CD8-positive, alpha-beta T cell (primary cell): ENCODE measurements at regions of chr11 and their contacts with region 1.

Region 1: DNA sequence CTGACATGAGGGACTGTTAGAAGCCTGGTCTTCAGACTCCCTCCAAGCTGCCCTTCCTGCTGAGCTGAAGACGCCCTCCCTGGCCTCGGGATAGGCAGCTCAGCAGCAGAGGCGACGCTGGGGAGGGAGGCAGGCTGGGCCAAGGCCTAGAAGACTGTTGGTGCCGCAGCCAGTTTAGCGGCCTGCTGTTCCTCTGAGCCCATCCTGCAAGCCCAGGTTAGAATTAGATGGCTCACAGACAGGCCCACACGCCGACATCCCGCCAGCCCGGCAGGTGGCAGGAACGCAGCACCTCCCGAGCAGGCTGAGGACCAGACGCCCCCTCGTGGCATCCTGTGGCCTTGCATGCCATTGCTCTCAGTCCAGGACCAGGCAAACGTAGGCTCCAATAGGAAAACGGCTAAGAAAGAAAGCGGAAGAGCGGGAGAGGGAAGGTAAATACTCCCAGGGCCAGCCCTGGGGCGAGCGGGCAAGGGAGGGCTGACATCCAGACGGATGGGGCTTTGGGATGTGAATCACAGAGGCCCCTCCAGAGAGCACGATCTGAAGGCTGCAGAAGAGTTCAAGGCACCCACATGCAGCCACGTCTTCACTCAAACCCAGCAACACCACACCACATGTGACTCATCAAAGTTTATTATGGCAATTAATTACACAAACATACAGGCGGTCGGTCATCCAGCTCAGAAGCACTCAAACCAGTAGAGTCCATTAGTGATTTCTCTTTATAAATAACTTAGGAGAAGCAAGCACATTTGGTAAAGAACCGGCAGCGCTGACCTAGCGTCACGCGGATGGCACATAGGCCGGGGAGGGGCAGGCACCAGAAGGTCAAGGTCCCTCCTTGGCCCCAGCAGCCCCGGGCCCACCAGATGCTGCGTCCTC is 27.6 kb downstream of the CD5 start:
- DNase-seq: peak; percentile 76 to 95 (median 91)
- ATAC-seq: peak; percentile 91
- H3K4me3 ChIP-seq: no peak overlapping the region
- H3K4me3 Mint-ChIP-seq: peak overlapping the region; percentile 46
- H3K27ac ChIP-seq: no peak overlapping the region
- H3K27ac Mint-ChIP-seq: peak overlapping the region; percentile 64
- H3K4me1 ChIP-seq: peaks cover 17% of the 10 kb centered on the region
- H3K4me1 Mint-ChIP-seq: peaks cover 21% of the 10 kb centered on the region
- H3K27me3 ChIP-seq: no peaks in the 10 kb centered on the region
- H3K27me3 Mint-ChIP-seq: no peaks in the 10 kb centered on the region
- CTCF ChIP-seq: peak; percentile 100

Region 2: DNA sequence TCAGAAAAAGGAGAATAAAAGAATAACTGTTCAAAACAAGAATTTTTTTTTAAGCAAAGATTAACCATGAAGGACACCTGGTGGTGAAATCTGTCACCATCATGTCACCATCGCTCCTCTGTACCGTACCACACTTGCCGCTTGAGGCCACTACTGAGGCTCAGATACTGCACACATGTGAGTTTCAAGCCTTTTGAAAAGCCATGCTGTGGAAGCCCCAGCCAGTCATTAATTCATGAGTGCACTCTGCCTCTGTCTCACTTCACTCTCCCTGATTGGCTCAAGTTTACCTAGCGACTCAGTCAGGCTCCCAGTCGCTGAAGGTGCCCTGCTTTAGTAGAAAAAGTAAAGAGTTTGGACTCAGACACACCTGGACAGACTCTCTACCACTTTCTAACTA is 643.9 kb before region 1 on chr11:
- CTCF ChIA-PET with region 1: no interaction called
- POLR2A ChIA-PET with region 1: no interaction called
- intact Hi-C with region 1: no loop called
- DNase-seq: peak in 2 of 9 experiments; percentile 36 to 53
- ATAC-seq: no peak
- H3K4me3 ChIP-seq: no peak overlapping the region
- H3K4me3 Mint-ChIP-seq: no peak overlapping the region
- H3K27ac ChIP-seq: no peak overlapping the region
- H3K27ac Mint-ChIP-seq: no peak overlapping the region
- H3K4me1 ChIP-seq: no peaks in the 10 kb centered on the region
- H3K4me1 Mint-ChIP-seq: no peaks in the 10 kb centered on the region
- H3K27me3 ChIP-seq: no peaks in the 10 kb centered on the region
- H3K27me3 Mint-ChIP-seq: peaks cover 2% of the 10 kb centered on the region
- CTCF ChIP-seq: no peak

Region 3: GRCh38 chr11:61071208-61071681 is 58.6 kb before region 1 on chr11:
- CTCF ChIA-PET with region 1: interaction called, 10 read pairs
- POLR2A ChIA-PET with region 1: interaction called, 4 read pairs
- intact Hi-C with region 1: no loop called
- DNase-seq: peak; percentile 37 to 87 (median 73)
- ATAC-seq: peak; percentile 98
- H3K4me3 ChIP-seq: no peak overlapping the region
- H3K4me3 Mint-ChIP-seq: peak overlapping the region; percentile 64
- H3K27ac ChIP-seq: peak overlapping the region; percentile 13 to 74
- H3K27ac Mint-ChIP-seq: peak overlapping the region; percentile 94
- H3K4me1 ChIP-seq: peaks cover 76% of the 10 kb centered on the region
- H3K4me1 Mint-ChIP-seq: peaks cover 81% of the 10 kb centered on the region
- H3K27me3 ChIP-seq: no peaks in the 10 kb centered on the region
- H3K27me3 Mint-ChIP-seq: no peaks in the 10 kb centered on the region
- CTCF ChIP-seq: no peak

Region 4: GRCh38 chr11:61111786-61112517 is 17.9 kb before region 1 on chr11:
- CTCF ChIA-PET with region 1: interaction called, 29 read pairs
- POLR2A ChIA-PET with region 1: interaction called, 5 read pairs
- intact Hi-C with region 1: no loop called
- DNase-seq: peak in 6 of 9 experiments; percentile 48 to 83 (median 66)
- ATAC-seq: peak; percentile 79
- H3K4me3 ChIP-seq: no peak overlapping the region
- H3K4me3 Mint-ChIP-seq: peak overlapping the region; percentile 79
- H3K27ac ChIP-seq: peak overlapping the region; percentile 46 to 91
- H3K27ac Mint-ChIP-seq: peak overlapping the region; percentile 87
- H3K4me1 ChIP-seq: peaks cover 86% of the 10 kb centered on the region
- H3K4me1 Mint-ChIP-seq: peaks cover 91% of the 10 kb centered on the region
- H3K27me3 ChIP-seq: peaks cover 0 to 4% of the 10 kb centered on the region in 2 experiments
- H3K27me3 Mint-ChIP-seq: no peaks in the 10 kb centered on the region
- CTCF ChIP-seq: no peak

Region 5: GRCh38 chr11:61141601-61142028 is 11.7 kb after region 1 on chr11:
- CTCF ChIA-PET with region 1: interaction called, 10 read pairs
- POLR2A ChIA-PET with region 1: interaction called, 5 read pairs
- intact Hi-C with region 1: no loop called
- DNase-seq: no peak
- ATAC-seq: no peak
- H3K4me3 ChIP-seq: no peak overlapping the region
- H3K4me3 Mint-ChIP-seq: no peak overlapping the region
- H3K27ac ChIP-seq: no peak overlapping the region
- H3K27ac Mint-ChIP-seq: no peak overlapping the region
- H3K4me1 ChIP-seq: peaks cover under 1% of the 10 kb centered on the region
- H3K4me1 Mint-ChIP-seq: peaks cover 9% of the 10 kb centered on the region
- H3K27me3 ChIP-seq: no peaks in the 10 kb centered on the region
- H3K27me3 Mint-ChIP-seq: no peaks in the 10 kb centered on the region
- CTCF ChIP-seq: no peak

Region 6: GRCh38 chr11:61152816-61153592 is 23.1 kb after region 1 on chr11:
- CTCF ChIA-PET with region 1: interaction called, 14 read pairs
- POLR2A ChIA-PET with region 1: no interaction called
- intact Hi-C with region 1: no loop called
- DNase-seq: no peak
- ATAC-seq: no peak
- H3K4me3 ChIP-seq: no peak overlapping the region
- H3K4me3 Mint-ChIP-seq: no peak overlapping the region
- H3K27ac ChIP-seq: no peak overlapping the region
- H3K27ac Mint-ChIP-seq: no peak overlapping the region
- H3K4me1 ChIP-seq: no peaks in the 10 kb centered on the region
- H3K4me1 Mint-ChIP-seq: peaks cover 6% of the 10 kb centered on the region
- H3K27me3 ChIP-seq: no peaks in the 10 kb centered on the region
- H3K27me3 Mint-ChIP-seq: no peaks in the 10 kb centered on the region
- CTCF ChIP-seq: no peak

Region 7: DNA sequence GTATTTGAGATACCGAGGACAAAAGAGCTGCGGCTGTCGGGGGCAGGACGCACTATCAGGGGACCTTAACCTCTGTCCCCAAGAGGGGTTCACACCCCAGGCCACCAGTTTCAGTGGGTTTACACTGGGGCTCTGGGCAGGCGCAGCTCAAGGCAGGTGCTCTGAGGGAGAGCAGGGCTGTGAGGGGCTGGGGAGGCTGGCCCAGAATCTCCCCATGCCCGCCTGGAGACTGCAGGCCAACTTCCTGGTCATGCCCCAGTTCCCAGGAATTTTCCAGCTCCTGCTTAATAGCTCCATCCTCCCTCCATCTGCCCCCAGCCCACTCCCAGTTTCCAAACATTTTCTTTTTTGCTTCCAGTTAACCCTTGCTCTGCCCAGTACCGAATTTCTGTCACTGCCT is 65.8 kb after region 1 on chr11:
- CTCF ChIA-PET with region 1: no interaction called
- POLR2A ChIA-PET with region 1: no interaction called
- intact Hi-C with region 1: no loop called
- DNase-seq: no peak
- ATAC-seq: no peak
- H3K4me3 ChIP-seq: no peak overlapping the region
- H3K4me3 Mint-ChIP-seq: no peak overlapping the region
- H3K27ac ChIP-seq: no peak overlapping the region
- H3K27ac Mint-ChIP-seq: no peak overlapping the region
- H3K4me1 ChIP-seq: no peaks in the 10 kb centered on the region
- H3K4me1 Mint-ChIP-seq: no peaks in the 10 kb centered on the region
- H3K27me3 ChIP-seq: peaks cover 0 to 3% of the 10 kb centered on the region in 2 experiments
- H3K27me3 Mint-ChIP-seq: peaks cover 12% of the 10 kb centered on the region
- CTCF ChIP-seq: no peak